ENCODE measurements at regions of chr7 and their contacts with region 1.

Region 1: DNA sequence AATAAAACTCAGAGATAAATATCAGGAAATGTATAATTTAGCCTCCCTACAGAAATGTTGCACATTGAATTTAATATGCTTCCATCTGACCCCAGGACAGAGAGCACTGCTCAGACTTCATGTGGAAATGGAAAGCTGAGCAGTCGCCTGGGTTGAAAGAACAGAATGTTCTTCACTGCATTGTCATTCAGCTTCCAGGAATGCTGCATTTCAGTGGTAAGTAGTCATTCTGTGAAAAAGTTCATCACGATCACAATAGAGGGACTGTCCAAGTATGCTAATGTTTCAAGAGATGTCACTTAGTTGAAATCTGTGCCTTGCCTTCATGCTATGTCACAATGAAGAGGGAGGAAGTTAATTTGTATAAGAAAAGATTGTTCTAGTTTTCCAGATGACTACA is 147.3 kb downstream of the NRCAM start:
- DNase-seq: peak; percentile 32 to 74
- H3K4me3 ChIP-seq: no peak overlapping the region
- H3K27ac ChIP-seq: peak overlapping the region; percentile 45
- H3K4me1 ChIP-seq: peaks cover 36% of the 10 kb centered on the region
- H3K27me3 ChIP-seq: no peaks in the 10 kb centered on the region
- CTCF ChIP-seq: no peak

Region 2: DNA sequence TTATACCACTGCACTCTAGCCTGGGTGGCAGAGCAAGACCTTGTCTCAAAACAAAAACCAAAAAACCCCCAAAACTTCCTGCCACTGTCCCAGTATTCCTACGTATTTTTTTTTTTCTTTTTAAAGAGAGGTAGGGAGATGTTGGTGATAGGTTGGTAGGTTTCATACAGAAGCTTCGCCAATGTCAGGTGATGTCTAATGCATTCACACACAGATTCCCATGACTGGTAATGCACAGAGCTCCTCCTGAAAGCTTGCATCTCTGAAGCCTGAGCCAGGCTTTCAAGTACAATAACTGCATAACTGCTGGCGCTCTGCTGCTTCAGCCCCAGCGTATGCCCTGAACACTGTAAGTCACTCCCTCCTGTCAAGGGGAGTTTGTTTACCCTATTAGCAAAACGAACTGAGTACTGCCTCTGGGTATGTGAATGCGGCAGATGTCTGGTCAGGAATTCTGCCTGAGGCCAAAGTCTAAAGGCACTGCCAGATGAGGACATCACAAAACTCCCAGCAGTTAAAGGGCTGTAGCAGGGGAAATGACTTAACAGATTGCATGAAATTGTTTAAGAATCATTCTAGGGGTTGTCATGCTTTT is 49.6 kb after region 1 on chr7:
- CTCF ChIA-PET with region 1: no interaction called
- POLR2A ChIA-PET with region 1: no interaction called
- intact Hi-C with region 1: loop called (anchors 2 kb)
- DNase-seq: peak; percentile 81 to 93
- H3K4me3 ChIP-seq: no peak overlapping the region
- H3K27ac ChIP-seq: 0 out of 2 replicates have a peak overlapping the region, but pooled peaks have one; percentile 3
- H3K4me1 ChIP-seq: peaks cover 13% of the 10 kb centered on the region
- H3K27me3 ChIP-seq: no peaks in the 10 kb centered on the region
- CTCF ChIP-seq: no peak

Region 3: GRCh38 chr7:109309790-109310189 is 1000.9 kb after region 1 on chr7:
- CTCF ChIA-PET with region 1: no interaction called
- POLR2A ChIA-PET with region 1: no interaction called
- intact Hi-C with region 1: no loop called
- DNase-seq: no peak
- H3K4me3 ChIP-seq: no peak overlapping the region
- H3K27ac ChIP-seq: no peak overlapping the region
- H3K4me1 ChIP-seq: no peaks in the 10 kb centered on the region
- H3K27me3 ChIP-seq: no peaks in the 10 kb centered on the region
- CTCF ChIP-seq: no peak